ENCODE measurements at regions of chr15 and their contacts with region 1.

Region 1: GRCh38 chr15:43370975-43371974 is at the starts of genes TUBGCP4 and ZSCAN29:
- DNase-seq: peak; percentile 84
- ATAC-seq: peak; percentile 89
- H3K4me3 Mint-ChIP-seq: peak within 1 kb of the TSS; percentile 91
- H3K27ac Mint-ChIP-seq: peak within 1 kb of the TSS; percentile 86
- H3K4me1 Mint-ChIP-seq: peaks cover 49% of the 10 kb centered on the region
- H3K27me3 Mint-ChIP-seq: no peaks in the 10 kb centered on the region
- total RNA-seq, gene TUBGCP4: 38.9 to 41.7 TPM
- total RNA-seq, gene ZSCAN29: 30.4 to 32.1 TPM

Region 2: GRCh38 chr15:43390723-43391122 is 19.4 kb after region 1 on chr15:
- CTCF ChIA-PET with region 1: interaction called, 17 read pairs
- POLR2A ChIA-PET with region 1: no interaction called
- DNase-seq: no peak
- ATAC-seq: no peak
- H3K4me3 Mint-ChIP-seq: no peak overlapping the region
- H3K27ac Mint-ChIP-seq: peak overlapping the region; percentile 32
- H3K4me1 Mint-ChIP-seq: no peaks in the 10 kb centered on the region
- H3K27me3 Mint-ChIP-seq: no peaks in the 10 kb centered on the region

Region 3: GRCh38 chr15:43410572-43411214 is 39.4 kb after region 1 on chr15:
- CTCF ChIA-PET with region 1: interaction called, 11 read pairs
- POLR2A ChIA-PET with region 1: no interaction called
- DNase-seq: no peak
- ATAC-seq: no peak
- H3K4me3 Mint-ChIP-seq: no peak overlapping the region
- H3K27ac Mint-ChIP-seq: no peak overlapping the region
- H3K4me1 Mint-ChIP-seq: no peaks in the 10 kb centered on the region
- H3K27me3 Mint-ChIP-seq: no peaks in the 10 kb centered on the region